Stomach (tissue), 19 donors: ENCODE measurements at regions of chr12 and their contacts with region 1.

Region 1: DNA sequence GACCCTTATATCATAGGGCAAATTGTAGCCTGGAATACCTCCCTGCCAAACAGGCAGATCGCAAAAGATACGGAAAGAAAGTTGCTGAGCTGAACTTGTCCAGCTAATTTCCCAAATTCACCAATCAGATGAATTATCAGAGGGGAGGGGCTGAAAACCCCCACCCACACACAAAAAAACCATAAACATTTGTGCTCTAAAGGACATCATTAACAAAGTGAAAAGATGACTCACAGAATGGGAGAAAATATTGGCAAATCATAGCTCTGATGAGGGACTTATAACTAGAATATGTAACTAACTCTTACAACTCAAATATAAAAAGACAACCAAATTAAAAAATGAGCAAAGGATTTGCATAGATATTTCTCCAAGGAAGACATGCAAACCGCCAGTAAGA is 36.3 kb downstream of the PTHLH start:
- DNase-seq: no peak
- H3K4me3 ChIP-seq: no peak overlapping the region
- H3K27ac ChIP-seq: no peak overlapping the region
- H3K4me1 ChIP-seq: no peaks in the 10 kb centered on the region
- H3K27me3 ChIP-seq: no peaks in the 10 kb centered on the region
- CTCF ChIP-seq: no peak
- EP300 ChIP-seq: no peak
- POLR2A ChIP-seq: no peak

Region 2: DNA sequence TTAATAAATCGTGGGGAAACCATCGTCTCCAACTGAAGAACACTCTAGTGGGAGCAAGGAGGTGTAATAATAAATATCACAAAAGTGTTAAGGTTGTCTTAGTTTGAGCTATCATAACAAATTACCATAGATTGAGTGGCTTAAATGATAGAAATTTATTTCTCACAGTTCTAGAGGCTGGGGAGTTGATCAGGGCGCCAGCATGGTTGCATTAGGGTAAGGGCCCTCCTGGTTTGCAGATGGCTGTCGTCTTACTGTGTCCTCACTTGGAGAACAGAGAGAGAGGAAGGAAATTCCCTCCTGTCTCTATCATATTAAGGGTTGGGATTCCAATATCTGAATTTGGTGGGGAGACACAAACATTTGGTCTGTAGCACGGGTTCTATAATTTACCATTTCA is 192.6 kb before region 1 on chr12:
- intact Hi-C with region 1: loop called (anchors 5 kb)
- DNase-seq: no peak
- H3K4me3 ChIP-seq: no peak overlapping the region
- H3K27ac ChIP-seq: no peak overlapping the region
- H3K4me1 ChIP-seq: peaks cover 0 to 25% (median 8%) of the 10 kb centered on the region in 4 donors
- H3K27me3 ChIP-seq: no peaks in the 10 kb centered on the region
- CTCF ChIP-seq: no peak
- EP300 ChIP-seq: no peak
- POLR2A ChIP-seq: no peak